ENCODE measurements at regions of chr15 and their contacts with region 1.

Region 1: GRCh38 chr15:69424748-69425413 is 10.7 kb downstream of the KIF23 start:
- DNase-seq: no peak
- ATAC-seq: no peak
- H3K4me3 ChIP-seq: no peak overlapping the region
- H3K27ac ChIP-seq: no peak overlapping the region
- H3K4me1 ChIP-seq: no peaks in the 10 kb centered on the region
- H3K27me3 ChIP-seq: no peaks in the 10 kb centered on the region
- CTCF ChIP-seq: no peak

Region 2: GRCh38 chr15:69357773-69358771 is 66.8 kb before region 1 on chr15:
- CTCF ChIA-PET with region 1: no interaction called
- POLR2A ChIA-PET with region 1: no interaction called
- in situ Hi-C with region 1: no loop called
- intact Hi-C with region 1: no loop called
- DNase-seq: no peak
- ATAC-seq: no peak
- H3K4me3 ChIP-seq: no peak overlapping the region
- H3K27ac ChIP-seq: no peak overlapping the region
- H3K4me1 ChIP-seq: no peaks in the 10 kb centered on the region
- H3K27me3 ChIP-seq: no peaks in the 10 kb centered on the region
- CTCF ChIP-seq: no peak

Region 3: DNA sequence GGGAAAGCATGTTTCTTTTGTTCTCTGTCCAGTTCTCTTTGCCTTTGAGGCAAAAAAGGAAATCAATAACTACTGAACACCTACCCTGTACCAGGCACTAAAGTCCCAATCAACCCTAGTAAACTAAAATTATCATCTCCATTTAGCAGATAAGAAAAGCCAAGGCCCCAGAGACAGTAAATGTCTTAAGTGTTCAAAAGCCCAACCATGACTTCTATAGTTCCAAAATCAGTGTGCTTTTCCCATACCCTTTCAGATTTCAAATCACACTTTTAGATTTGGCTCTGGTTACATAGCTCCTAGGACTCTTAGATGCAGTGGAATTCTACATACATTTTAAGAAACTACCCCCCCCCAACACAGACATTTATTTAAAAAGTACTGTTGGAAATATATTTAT is 1275.0 kb after region 1 on chr15:
- CTCF ChIA-PET with region 1: no interaction called
- POLR2A ChIA-PET with region 1: interaction called, 11 read pairs
- in situ Hi-C with region 1: no loop called
- intact Hi-C with region 1: no loop called
- DNase-seq: no peak
- ATAC-seq: no peak
- H3K4me3 ChIP-seq: peak overlapping the region in 1 of 2 experiments; percentile 14; a peak in 2 of 4 replicates
- H3K27ac ChIP-seq: peak overlapping the region; percentile 94
- H3K4me1 ChIP-seq: peaks cover 82% of the 10 kb centered on the region
- H3K27me3 ChIP-seq: no peaks in the 10 kb centered on the region
- CTCF ChIP-seq: no peak

Measured in Panc1 (cell line).